ENCODE measurements at regions of chr3 and their contacts with region 1.

Region 1: DNA sequence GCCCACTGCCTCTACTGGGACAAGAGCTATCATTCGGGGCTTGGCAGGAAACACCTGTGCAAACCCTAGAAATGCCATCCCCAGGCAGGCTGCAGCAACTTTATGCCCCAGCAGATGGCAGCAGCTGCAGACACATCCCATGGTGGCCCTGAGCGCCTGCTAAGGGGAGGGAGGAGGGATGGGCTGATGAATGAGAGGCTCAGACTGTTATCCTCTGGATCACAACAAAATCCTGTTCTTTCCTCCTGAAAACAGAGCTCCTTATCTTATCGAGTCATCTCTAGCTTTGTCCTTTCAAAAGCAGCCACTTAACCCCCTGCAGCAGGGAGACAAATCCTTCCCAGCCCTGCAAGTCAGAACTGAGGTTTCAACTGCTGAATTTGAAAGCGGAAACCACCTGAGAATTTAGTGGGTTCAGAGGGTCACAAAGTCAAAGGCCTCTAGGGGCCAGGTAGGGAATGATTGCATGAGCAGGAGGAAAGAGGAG is 90.6 kb upstream of the PROK2 start:
- DNase-seq: peak; percentile 93
- H3K4me3 Mint-ChIP-seq: peak overlapping the region; percentile 14
- H3K27ac Mint-ChIP-seq: peak overlapping the region; percentile 74
- H3K4me1 Mint-ChIP-seq: peaks cover 28% of the 10 kb centered on the region
- H3K27me3 Mint-ChIP-seq: peaks cover 12% of the 10 kb centered on the region

Region 2: DNA sequence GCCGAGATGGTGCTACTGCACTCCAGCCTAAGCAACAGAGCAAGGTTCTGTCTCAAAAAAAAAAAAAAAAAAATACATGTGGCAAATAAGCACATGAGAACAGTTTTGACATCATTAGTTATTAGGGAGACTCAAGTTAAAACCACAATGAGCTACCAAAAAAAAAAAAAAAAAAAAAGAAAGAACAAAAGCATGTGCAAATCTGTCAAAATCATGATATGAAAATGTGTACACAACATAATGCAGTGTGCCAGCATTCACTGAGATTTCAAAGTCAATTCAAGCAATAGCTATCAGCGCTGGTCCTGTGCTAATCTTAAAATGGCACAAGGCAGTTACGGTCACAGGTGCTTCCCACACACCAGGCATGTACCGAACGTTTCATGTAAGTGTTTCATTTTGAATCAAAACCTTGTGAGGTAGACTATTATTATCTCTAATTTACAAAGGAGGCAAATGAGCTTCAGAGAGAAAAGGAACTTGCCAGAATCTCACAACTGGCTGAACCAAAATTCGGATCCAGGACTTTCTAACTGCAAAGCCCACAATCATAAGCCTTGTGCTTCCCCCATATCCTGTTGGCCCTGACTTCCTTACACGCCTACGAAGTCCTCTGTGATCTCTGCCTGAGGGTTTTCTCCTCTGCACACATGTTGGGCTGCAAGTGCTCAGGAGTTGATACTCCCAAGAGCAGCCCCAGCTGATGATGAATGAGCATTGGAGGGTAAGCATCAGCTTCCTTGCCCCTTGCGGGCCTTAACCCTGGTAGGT is 109.5 kb after region 1 on chr3:
- intact Hi-C with region 1: loop called (anchors 10 kb)
- DNase-seq: peak; percentile 75
- H3K4me3 Mint-ChIP-seq: peak overlapping the region; percentile 74
- H3K27ac Mint-ChIP-seq: peak overlapping the region; percentile 87
- H3K4me1 Mint-ChIP-seq: peaks cover 49% of the 10 kb centered on the region
- H3K27me3 Mint-ChIP-seq: no peaks in the 10 kb centered on the region

Region 3: DNA sequence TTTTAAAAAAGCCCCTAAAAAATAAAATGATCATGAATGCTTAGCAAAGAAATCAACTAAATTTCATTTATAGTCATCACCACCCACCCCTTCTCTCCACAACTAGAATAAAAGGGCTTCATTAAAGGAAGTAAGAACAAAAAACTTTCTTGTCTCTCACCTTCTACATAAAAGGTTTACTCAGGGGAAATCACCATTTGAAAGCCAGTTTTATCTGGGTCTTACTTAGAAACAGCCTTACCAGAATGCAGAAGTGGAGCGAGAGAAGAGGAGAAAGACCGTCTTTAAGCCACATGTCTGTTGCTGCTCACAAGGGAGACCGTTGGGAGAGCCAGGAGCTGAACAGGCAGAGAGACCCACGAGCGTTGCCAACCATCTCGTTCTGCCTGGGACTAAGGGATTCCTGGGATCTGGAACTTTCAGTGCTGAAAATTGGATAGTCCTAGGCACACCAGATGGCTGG is 259.5 kb after region 1 on chr3:
- intact Hi-C with region 1: loop called (anchors 10 kb)
- DNase-seq: peak; percentile 66
- H3K4me3 Mint-ChIP-seq: peak overlapping the region; percentile 75
- H3K27ac Mint-ChIP-seq: peak overlapping the region; percentile 96
- H3K4me1 Mint-ChIP-seq: peaks cover 39% of the 10 kb centered on the region
- H3K27me3 Mint-ChIP-seq: no peaks in the 10 kb centered on the region

Region 4: DNA sequence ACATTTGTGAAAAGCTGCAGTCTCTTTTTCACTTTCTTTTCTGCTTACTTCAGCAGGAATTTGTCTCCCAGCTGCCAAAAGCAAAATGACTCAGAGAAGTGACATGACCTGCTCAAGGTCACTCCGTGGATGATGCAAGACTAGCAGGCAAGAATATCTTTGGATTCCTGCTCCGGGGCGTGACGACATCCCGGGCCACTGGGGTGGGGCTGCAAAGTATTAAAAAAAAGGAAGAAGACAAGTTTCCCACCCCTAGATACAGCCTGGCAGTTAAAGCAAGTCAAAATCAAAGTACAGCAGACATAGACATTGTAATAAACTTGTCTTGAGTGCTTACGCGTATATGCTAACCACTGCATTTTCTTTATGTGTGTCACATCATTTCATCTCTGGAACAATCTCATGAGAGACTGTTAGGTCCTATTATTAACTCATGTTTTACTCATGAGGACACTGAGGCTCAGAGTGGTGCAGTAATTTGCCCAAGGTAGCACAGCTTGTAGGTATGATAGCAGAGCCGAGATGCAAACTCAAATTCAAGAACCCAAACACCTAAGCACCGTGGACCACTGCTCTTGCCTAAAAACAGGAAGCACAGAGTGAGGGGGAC is 394.7 kb after region 1 on chr3:
- intact Hi-C with region 1: loop called (anchors 5 kb)
- DNase-seq: peak; percentile 65
- H3K4me3 Mint-ChIP-seq: peak overlapping the region; percentile 12
- H3K27ac Mint-ChIP-seq: peak overlapping the region; percentile 67
- H3K4me1 Mint-ChIP-seq: peaks cover 57% of the 10 kb centered on the region
- H3K27me3 Mint-ChIP-seq: no peaks in the 10 kb centered on the region

Region 5: GRCh38 chr3:72375237-72376076 is 500.0 kb after region 1 on chr3:
- intact Hi-C with region 1: loop called (anchors 1 kb)
- DNase-seq: peak; percentile 68
- H3K4me3 Mint-ChIP-seq: peak overlapping the region; percentile 43
- H3K27ac Mint-ChIP-seq: peak overlapping the region; percentile 80
- H3K4me1 Mint-ChIP-seq: peaks cover 47% of the 10 kb centered on the region
- H3K27me3 Mint-ChIP-seq: no peaks in the 10 kb centered on the region

Region 6: DNA sequence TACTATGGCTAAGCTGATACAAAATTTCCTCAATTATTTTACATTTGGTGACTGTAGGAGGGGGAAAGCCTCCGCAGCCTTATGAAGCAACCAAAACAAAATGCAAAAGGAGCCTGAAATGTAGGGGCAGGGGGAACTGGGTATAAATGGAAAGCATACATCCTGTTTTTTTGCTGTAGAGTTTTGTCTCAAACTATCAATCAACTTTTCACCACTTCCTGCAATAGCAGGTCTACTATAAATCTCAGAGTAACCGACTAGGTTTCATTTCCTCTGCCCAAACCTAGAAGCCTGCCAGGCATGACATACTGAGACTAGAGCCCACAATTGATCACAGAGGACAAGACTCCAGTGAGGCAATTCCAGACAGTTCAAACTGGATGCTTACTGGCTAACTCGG is 881.4 kb after region 1 on chr3:
- intact Hi-C with region 1: loop called (anchors 10 kb)
- DNase-seq: peak; percentile 87
- H3K4me3 Mint-ChIP-seq: peak overlapping the region; percentile 60
- H3K27ac Mint-ChIP-seq: peak overlapping the region; percentile 81
- H3K4me1 Mint-ChIP-seq: peaks cover 39% of the 10 kb centered on the region
- H3K27me3 Mint-ChIP-seq: no peaks in the 10 kb centered on the region

Region 7: DNA sequence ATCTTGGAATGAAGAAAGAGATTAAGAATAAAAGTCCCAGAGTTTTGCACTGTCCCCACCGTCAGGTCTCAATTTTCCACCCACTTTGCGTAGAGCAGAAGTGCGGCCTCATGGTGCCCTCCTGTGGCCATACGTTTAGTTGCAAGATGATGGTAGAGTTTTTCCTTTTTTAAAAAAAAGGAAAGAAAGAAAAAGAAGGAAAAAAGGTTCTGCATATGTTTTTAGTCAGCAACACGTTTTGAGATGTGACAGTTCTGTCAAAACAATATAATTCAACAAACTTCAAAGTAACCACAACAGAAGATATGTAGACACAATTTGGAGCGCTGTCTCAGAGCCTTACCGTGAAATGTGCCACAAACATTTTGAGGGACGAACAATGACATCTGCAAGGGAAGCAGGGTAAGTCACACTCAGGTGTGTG is 1210.6 kb after region 1 on chr3:
- intact Hi-C with region 1: loop called (anchors 10 kb)
- DNase-seq: peak; percentile 84
- H3K4me3 Mint-ChIP-seq: no peak overlapping the region
- H3K27ac Mint-ChIP-seq: no peak overlapping the region
- H3K4me1 Mint-ChIP-seq: peaks cover 8% of the 10 kb centered on the region
- H3K27me3 Mint-ChIP-seq: peaks cover 7% of the 10 kb centered on the region

Measured in activated CD4-positive, alpha-beta T cell treated with anti-CD3 and anti-CD28 coated beads, Interleukin-2, amount 10 ng/mL, durations not matched to agents 24 days and 14 days (primary cell).